H1 (cell line): ENCODE measurements at regions of chr17 and their contacts with region 1.

Region 1: GRCh38 chr17:29252101-29252866 is 5.6 kb downstream of the CRYBA1 start:
- DNase-seq: no peak
- H3K4me3 ChIP-seq: no peak overlapping the region
- H3K27ac ChIP-seq: no peak overlapping the region
- H3K4me1 ChIP-seq: peaks cover 0 to 3% (median 0%) of the 10 kb centered on the region in 4 experiments; a peak in 1 of 7 replicates
- H3K27me3 ChIP-seq: no peaks in the 10 kb centered on the region
- CTCF ChIP-seq: peak in 2 of 3 experiments; percentile 28 to 56; a peak in 2 of 4 replicates
- EP300 ChIP-seq: no peak
- POLR2A ChIP-seq: no peak
- RAD21 ChIP-seq: peak; percentile 37

Region 2: GRCh38 chr17:29241015-29241963 is 11.0 kb before region 1 on chr17:
- CTCF ChIA-PET with region 1: interaction called, 34 read pairs
- POLR2A ChIA-PET with region 1: interaction called, 10 read pairs
- DNase-seq: peak in 1 of 2 experiments; percentile 67
- H3K4me3 ChIP-seq: peak overlapping the region in 1 of 4 experiments; percentile 4; a peak in 2 of 8 replicates
- H3K27ac ChIP-seq: peak overlapping the region; percentile 51
- H3K4me1 ChIP-seq: peaks cover 7 to 13% (median 9%) of the 10 kb centered on the region in 4 experiments; a peak in 6 of 7 replicates
- H3K27me3 ChIP-seq: no peaks in the 10 kb centered on the region; a peak in 1 of 7 replicates
- CTCF ChIP-seq: no peak
- EP300 ChIP-seq: no peak
- POLR2A ChIP-seq: 0 out of 3 replicates have a peak, but pooled peaks of 1 of the 2 experiments have one; percentile 44
- RAD21 ChIP-seq: no peak